ENCODE measurements at regions of chr3 and their contacts with region 1.

Region 1: DNA sequence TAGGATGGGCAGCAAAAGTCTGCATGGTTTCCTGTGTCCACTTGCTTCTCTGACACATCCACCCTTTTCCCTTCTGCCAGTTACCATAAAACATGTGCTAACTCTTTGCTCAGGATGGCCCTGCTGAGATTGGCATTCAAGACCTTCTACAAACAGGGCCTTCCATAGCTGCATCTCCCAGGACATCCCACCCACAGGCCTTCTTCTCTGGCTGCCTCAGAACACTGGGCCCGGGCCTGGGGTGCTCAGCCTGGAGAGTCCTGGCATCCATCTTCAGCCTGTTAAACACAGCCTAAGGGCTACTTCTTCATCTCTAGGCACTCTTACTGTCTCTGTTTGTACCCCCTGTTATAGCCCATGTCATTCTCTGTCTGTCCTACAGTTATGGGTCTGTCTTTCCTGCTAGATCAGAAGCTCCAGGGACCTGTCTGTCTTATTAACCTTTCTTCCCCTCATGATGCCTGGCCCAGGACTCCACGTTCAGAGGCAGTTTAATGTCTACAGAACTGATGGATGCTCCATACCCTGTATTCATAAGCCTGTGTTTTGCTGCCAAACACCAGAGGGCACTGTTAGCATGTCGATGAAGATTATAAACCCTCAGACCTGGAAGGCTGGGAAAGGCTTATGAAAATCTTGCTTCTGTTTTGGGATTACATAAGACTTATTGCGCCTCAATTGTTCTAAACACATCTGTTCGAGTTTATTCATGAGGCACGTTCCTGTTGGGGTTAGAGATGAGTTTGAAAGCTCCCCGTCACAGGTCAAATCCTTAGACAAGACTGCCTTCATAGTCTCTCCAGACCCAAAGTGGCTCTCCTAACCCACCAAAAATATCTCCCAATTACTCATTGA is 16.5 kb downstream of the SEMA3G start:
- DNase-seq: peak; percentile 82
- H3K4me3 Mint-ChIP-seq: no peak overlapping the region
- H3K27ac Mint-ChIP-seq: no peak overlapping the region
- H3K4me1 Mint-ChIP-seq: peaks cover 1% of the 10 kb centered on the region
- H3K27me3 Mint-ChIP-seq: peaks cover 17% of the 10 kb centered on the region

Region 2: DNA sequence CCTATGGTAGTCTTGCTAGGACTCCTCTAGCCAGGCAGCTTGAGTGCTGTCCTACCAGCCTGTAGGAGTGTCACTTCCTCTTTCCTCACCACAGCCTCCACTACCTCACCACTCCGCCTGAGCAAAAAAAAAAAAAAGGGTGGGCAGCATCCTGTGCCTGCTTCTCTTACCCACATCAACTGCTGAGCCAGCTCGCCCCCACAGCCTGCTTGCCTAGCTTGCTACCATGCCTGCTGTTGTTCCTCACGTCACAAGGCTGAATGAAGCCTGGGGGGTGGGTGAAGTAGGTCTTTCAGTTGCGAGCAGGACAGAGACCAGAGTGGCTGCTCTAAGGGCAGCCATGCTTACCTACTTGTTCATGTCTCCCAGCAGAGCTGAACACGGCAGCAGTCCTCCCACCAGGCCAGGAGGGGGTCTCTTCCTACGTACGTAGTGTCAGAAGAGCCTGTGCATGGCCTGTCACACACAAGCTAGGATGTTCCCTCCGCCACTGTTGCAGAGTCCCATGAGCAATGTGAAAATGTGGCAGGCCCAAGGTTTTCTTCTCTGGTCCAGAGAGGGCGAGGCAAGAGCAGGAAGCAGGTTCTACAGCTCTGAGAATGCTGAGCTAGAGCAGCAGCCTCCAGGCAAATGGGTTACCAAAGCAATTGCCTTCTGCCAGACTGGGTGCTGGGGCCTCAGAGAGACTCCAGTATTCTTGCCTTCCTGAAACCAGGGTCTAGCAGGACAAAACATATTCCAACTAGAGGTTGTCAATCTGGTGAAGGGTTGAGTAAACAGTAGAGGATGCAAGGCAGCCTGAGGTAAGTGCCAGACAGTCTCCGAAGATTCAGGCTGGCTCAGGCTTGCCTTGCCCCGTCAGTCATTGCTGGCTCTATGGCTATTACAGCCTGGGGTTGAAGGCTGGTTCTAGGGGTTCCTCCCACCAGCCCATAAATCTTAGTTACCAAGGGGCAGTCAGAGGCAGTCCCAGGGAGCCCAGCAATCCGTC is 174.8 kb before region 1 on chr3:
- intact Hi-C with region 1: no loop called
- DNase-seq: peak; percentile 95
- H3K4me3 Mint-ChIP-seq: peak overlapping the region; percentile 88
- H3K27ac Mint-ChIP-seq: peak overlapping the region; percentile 99
- H3K4me1 Mint-ChIP-seq: peaks cover 77% of the 10 kb centered on the region
- H3K27me3 Mint-ChIP-seq: peaks cover 2% of the 10 kb centered on the region

Region 3: GRCh38 chr3:52446631-52447511 is 18.5 kb after region 1 on chr3:
- intact Hi-C with region 1: loop called (anchors 1 kb)
- DNase-seq: peak; percentile 93
- H3K4me3 Mint-ChIP-seq: no peak overlapping the region
- H3K27ac Mint-ChIP-seq: peak overlapping the region; percentile 79
- H3K4me1 Mint-ChIP-seq: peaks cover 6% of the 10 kb centered on the region
- H3K27me3 Mint-ChIP-seq: no peaks in the 10 kb centered on the region

Region 4: GRCh38 chr3:52471371-52472238 is 43.2 kb after region 1 on chr3:
- intact Hi-C with region 1: no loop called
- DNase-seq: peak; percentile 75
- H3K4me3 Mint-ChIP-seq: no peak overlapping the region
- H3K27ac Mint-ChIP-seq: no peak overlapping the region
- H3K4me1 Mint-ChIP-seq: peaks cover 4% of the 10 kb centered on the region
- H3K27me3 Mint-ChIP-seq: no peaks in the 10 kb centered on the region

Region 5: GRCh38 chr3:52623234-52623792 is 194.9 kb after region 1 on chr3:
- intact Hi-C with region 1: no loop called
- DNase-seq: no peak
- H3K4me3 Mint-ChIP-seq: no peak overlapping the region
- H3K27ac Mint-ChIP-seq: no peak overlapping the region
- H3K4me1 Mint-ChIP-seq: peaks cover 10% of the 10 kb centered on the region
- H3K27me3 Mint-ChIP-seq: no peaks in the 10 kb centered on the region